T-cell (primary cell): ENCODE measurements at regions of chr14 and their contacts with region 1.

Region 1: GRCh38 chr14:97634751-97635150 is 837.6 kb downstream of the VRK1 start:
- DNase-seq: peak in 34 of 35 experiments; percentile 10 to 62 (median 38)
- ATAC-seq: peak; percentile 40 to 95 (median 52)
- H3K4me3 ChIP-seq: peak overlapping the region in 1 of 2 donors; percentile 43
- H3K4me3 Mint-ChIP-seq: peak overlapping the region; percentile 82 to 89 (median 83)
- H3K27ac ChIP-seq: peak overlapping the region; percentile 31
- H3K27ac Mint-ChIP-seq: peak overlapping the region; percentile 87 to 90
- H3K4me1 ChIP-seq: peaks cover 10 to 11% of the 10 kb centered on the region in 2 experiments
- H3K4me1 Mint-ChIP-seq: peaks cover 53 to 63% (median 59%) of the 10 kb centered on the region in 3 donors
- H3K27me3 ChIP-seq: no peaks in the 10 kb centered on the region
- H3K27me3 Mint-ChIP-seq: no peaks in the 10 kb centered on the region

Region 2: DNA sequence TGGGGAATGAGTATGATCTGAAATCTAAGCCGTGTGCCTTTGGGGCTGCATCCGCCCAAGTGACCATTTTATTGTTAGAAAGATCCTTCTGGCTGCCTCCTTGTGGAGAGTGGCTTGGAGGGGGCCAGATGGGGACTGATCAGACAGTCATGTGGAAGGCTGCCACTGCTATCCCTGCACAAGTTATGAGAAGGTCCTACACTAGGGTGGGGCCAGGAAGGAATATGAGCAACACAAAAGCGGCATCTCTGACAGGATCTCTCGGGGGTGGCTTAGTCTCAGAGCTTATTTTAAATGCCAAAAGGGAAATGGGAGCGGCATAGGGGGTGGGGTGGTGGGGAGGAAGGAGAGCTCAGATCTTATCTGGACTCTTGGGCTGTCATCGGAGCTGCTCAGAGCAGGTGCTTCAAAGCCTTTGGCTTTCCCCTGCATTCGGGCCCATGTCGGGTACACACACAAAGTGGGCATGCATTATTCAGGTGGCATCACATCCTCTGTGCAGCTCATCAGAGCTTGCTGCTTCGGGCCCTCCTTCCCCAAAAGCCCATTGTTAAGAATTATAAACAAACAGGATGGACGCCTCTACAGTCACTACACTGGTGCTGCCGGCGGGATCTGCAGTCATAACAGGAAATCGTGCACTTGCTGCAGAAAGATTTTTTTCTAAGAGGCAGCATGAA is 32.2 kb before region 1 on chr14:
- CTCF ChIA-PET with region 1: interaction called, 3 to 11 read pairs
- POLR2A ChIA-PET with region 1: no interaction called
- DNase-seq: peak; percentile 67 to 92 (median 80)
- ATAC-seq: peak; percentile 91 to 92 (median 91)
- H3K4me3 ChIP-seq: peak overlapping the region; percentile 29 to 31
- H3K4me3 Mint-ChIP-seq: no peak overlapping the region
- H3K27ac ChIP-seq: peak overlapping the region; percentile 93
- H3K27ac Mint-ChIP-seq: no peak overlapping the region
- H3K4me1 ChIP-seq: peaks cover 40 to 50% of the 10 kb centered on the region in 2 experiments
- H3K4me1 Mint-ChIP-seq: peaks cover 6 to 40% (median 7%) of the 10 kb centered on the region in 3 donors
- H3K27me3 ChIP-seq: no peaks in the 10 kb centered on the region
- H3K27me3 Mint-ChIP-seq: no peaks in the 10 kb centered on the region

Region 3: DNA sequence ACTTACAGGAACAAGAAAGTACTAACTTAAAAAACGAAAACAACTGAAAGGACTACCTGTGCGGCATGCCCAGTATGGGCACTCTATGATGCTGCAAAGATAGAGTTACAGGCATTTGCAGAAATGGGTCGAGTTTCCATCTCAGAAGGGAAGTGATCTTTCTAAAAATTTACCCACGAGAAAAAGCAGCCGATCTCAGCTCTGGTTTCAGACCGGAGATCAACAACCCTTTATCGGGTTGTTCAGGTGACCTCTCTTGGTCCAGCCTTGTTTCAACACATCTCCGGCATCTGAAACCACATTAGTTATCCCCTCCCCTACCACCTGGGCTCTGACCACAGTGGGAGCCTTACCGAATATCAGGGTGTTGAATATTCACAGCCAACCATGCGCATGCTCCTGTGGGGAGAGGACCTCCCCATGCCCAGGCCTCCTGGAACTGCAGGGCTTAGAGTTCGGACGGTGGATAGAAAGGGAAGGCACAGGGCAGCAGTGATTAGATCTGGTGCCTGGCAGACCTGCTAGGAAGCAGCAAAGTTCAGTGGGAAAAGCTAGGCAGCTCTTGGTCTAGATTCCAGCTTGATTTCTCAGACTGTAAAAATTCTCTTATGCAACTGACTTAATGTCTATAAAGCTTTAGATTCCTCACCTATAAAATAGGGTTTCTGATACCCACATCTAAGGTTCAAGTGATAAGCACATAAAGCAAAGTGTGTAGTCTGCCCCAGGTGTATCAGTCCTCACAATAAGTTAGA is 68.4 kb after region 1 on chr14:
- CTCF ChIA-PET with region 1: no interaction called
- POLR2A ChIA-PET with region 1: no interaction called
- DNase-seq: peak in 19 of 35 experiments; percentile 11 to 75 (median 31)
- ATAC-seq: peak; percentile 66 to 77 (median 71)
- H3K4me3 ChIP-seq: no peak overlapping the region
- H3K4me3 Mint-ChIP-seq: peak overlapping the region; percentile 62 to 69 (median 67)
- H3K27ac ChIP-seq: peak overlapping the region; percentile 77
- H3K27ac Mint-ChIP-seq: peak overlapping the region; percentile 96 to 98
- H3K4me1 ChIP-seq: peaks cover 40 to 65% of the 10 kb centered on the region in 2 experiments
- H3K4me1 Mint-ChIP-seq: peaks cover 65 to 85% (median 84%) of the 10 kb centered on the region in 3 donors
- H3K27me3 ChIP-seq: no peaks in the 10 kb centered on the region
- H3K27me3 Mint-ChIP-seq: no peaks in the 10 kb centered on the region